ENCODE measurements at regions of chr7 and their contacts with region 1.

Region 1: GRCh38 chr7:21253740-21254687 is 173.9 kb upstream of the SP4 start:
- DNase-seq: peak; percentile 58
- H3K4me3 ChIP-seq: no peak overlapping the region
- H3K27ac ChIP-seq: no peak overlapping the region
- H3K4me1 ChIP-seq: no peaks in the 10 kb centered on the region
- H3K27me3 ChIP-seq: peaks cover 9% of the 10 kb centered on the region
- CTCF ChIP-seq: peak; percentile 58

Region 2: DNA sequence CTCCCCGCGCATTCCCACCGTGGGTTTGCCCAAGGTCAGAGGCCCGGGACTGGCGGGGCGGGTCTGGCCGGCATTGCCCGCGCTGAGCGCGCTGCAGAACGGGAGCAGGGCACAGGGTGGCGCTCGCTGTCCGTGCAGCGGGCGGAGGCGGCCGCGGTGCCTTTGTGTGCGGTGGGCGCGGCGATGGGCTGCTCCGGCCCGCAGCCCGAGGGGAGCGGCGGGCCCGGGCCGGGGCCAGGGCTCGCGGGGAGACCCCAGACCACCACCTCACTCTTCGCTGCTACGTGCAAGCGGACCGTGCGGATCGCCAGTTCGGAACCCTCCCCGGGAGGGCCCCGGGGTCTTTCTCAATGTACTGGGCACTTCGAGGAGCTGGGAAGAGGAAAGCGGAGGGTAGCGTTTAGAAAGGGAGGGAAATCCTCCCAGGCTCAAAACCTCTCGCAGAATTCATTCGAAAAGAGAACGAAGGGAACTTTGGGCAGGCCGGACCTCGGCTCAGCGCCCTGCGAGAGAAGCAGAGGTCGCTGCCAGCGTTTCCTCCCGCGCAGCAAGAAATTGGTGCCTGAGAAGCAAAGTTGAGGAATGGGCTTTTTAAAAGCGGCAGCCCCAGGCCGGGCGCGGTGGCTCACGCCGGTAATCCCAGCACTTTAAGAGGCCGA is 475.8 kb before region 1 on chr7:
- intact Hi-C with region 1: loop called (anchors 5 kb)
- DNase-seq: peak; percentile 36
- H3K4me3 ChIP-seq: peak overlapping the region; percentile 23
- H3K27ac ChIP-seq: no peak overlapping the region
- H3K4me1 ChIP-seq: peaks cover 3% of the 10 kb centered on the region
- H3K27me3 ChIP-seq: peaks cover 72% of the 10 kb centered on the region
- CTCF ChIP-seq: peak; percentile 48

Region 3: GRCh38 chr7:20988340-20988739 is 265.7 kb before region 1 on chr7:
- intact Hi-C with region 1: loop called (anchors 5 kb)
- DNase-seq: no peak
- H3K4me3 ChIP-seq: no peak overlapping the region
- H3K27ac ChIP-seq: no peak overlapping the region
- H3K4me1 ChIP-seq: no peaks in the 10 kb centered on the region
- H3K27me3 ChIP-seq: no peaks in the 10 kb centered on the region
- CTCF ChIP-seq: no peak

Region 4: DNA sequence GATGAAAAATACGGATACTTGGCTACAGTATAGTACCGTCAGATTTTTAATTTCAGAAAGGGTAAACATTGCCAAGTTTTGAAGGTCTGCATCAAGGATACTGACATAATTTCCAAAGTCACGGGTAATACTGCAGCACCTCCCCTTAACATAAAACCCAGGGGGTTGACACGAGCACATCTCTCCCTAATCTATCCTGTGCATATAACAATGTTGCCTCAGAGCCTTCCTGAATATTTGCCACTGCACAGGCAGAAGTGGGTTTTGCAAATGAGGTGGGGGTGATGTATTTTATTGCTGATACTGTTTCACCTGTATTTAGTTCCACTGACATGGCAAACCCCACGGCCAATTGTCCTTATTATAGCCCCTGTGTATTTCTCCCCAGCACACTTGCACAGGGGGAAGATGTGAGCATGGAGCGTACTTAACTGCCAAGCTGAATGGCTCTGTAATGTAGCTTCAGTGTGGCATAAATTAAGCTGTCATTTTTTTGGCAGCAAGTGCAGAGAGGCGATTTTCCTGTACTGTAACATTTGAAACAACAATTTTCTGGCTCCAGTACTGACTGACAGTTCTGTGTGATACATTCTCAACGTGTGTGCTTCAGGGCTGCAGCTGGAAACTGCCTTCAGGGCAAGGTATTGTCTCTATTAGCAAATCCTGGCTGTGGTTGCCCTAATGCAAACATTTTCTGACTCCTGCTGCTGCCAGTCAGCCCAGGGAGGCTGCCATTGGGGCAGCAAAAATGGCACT is 125.8 kb before region 1 on chr7:
- intact Hi-C with region 1: no loop called
- DNase-seq: no peak
- H3K4me3 ChIP-seq: no peak overlapping the region
- H3K27ac ChIP-seq: no peak overlapping the region
- H3K4me1 ChIP-seq: no peaks in the 10 kb centered on the region
- H3K27me3 ChIP-seq: no peaks in the 10 kb centered on the region
- CTCF ChIP-seq: no peak

Measured in colonic mucosa (tissue), 4 donors.